ENCODE measurements at regions of chr9 and their contacts with region 1.

Region 1: GRCh38 chr9:131762356-131762932 is 22.6 kb upstream of the RAPGEF1 start:
- DNase-seq: peak; percentile 70 to 88
- H3K4me3 ChIP-seq: no peak overlapping the region
- H3K4me3 Mint-ChIP-seq: no peak overlapping the region
- H3K27ac Mint-ChIP-seq: no peak overlapping the region
- H3K4me1 ChIP-seq: peaks cover 4% of the 10 kb centered on the region
- H3K4me1 Mint-ChIP-seq: no peaks in the 10 kb centered on the region
- H3K27me3 ChIP-seq: no peaks in the 10 kb centered on the region
- H3K27me3 Mint-ChIP-seq: peaks cover 7% of the 10 kb centered on the region
- CTCF ChIP-seq: peak; percentile 85 to 92

Region 2: DNA sequence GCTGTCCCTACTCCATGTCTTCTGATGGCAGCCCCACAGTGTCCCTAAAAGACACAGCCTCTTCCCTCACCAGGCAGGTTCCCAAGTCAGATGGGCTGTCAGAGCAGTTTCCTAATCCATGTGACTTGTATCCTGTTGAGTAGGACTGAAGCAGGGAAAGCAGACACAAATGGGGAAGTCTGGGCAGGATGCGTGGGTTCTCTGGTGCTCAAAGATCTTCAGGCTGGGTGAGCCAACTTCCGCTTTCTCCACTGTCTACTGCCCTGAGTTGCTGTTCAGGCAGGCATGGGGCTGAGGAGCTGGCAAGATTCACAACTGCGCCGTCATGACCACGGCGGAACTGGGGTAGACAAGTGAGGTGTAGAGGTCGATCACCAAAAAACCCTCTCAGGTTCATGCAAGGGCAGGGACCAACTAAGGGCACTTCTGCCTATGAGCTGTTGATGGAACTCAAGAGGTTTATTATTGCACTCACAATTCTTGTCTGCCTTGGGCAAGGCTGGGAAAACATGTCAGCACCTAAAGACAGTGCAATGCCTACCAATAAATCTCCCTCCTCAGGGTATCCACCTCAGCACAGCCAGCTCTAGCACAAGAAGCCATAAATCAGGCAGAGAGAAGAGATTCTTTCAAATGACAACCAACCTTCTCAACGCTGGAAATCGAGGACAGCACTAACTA is 105.9 kb before region 1 on chr9:
- CTCF ChIA-PET with region 1: no interaction called
- POLR2A ChIA-PET with region 1: no interaction called
- intact Hi-C with region 1: no loop called
- DNase-seq: no peak
- H3K4me3 ChIP-seq: no peak overlapping the region
- H3K4me3 Mint-ChIP-seq: no peak overlapping the region
- H3K27ac Mint-ChIP-seq: no peak overlapping the region
- H3K4me1 ChIP-seq: peaks cover 29% of the 10 kb centered on the region
- H3K4me1 Mint-ChIP-seq: peaks cover 33% of the 10 kb centered on the region
- H3K27me3 ChIP-seq: no peaks in the 10 kb centered on the region
- H3K27me3 Mint-ChIP-seq: no peaks in the 10 kb centered on the region
- CTCF ChIP-seq: no peak

Region 3: GRCh38 chr9:131954299-131954698 is 191.9 kb after region 1 on chr9:
- CTCF ChIA-PET with region 1: no interaction called
- POLR2A ChIA-PET with region 1: no interaction called
- intact Hi-C with region 1: loop called (anchors 1 kb)
- DNase-seq: peak in 1 of 2 experiments; percentile 36
- H3K4me3 ChIP-seq: no peak overlapping the region
- H3K4me3 Mint-ChIP-seq: no peak overlapping the region
- H3K27ac Mint-ChIP-seq: no peak overlapping the region
- H3K4me1 ChIP-seq: no peaks in the 10 kb centered on the region
- H3K4me1 Mint-ChIP-seq: no peaks in the 10 kb centered on the region
- H3K27me3 ChIP-seq: no peaks in the 10 kb centered on the region
- H3K27me3 Mint-ChIP-seq: no peaks in the 10 kb centered on the region
- CTCF ChIP-seq: peak in 1 of 2 experiments; percentile 64

Region 4: DNA sequence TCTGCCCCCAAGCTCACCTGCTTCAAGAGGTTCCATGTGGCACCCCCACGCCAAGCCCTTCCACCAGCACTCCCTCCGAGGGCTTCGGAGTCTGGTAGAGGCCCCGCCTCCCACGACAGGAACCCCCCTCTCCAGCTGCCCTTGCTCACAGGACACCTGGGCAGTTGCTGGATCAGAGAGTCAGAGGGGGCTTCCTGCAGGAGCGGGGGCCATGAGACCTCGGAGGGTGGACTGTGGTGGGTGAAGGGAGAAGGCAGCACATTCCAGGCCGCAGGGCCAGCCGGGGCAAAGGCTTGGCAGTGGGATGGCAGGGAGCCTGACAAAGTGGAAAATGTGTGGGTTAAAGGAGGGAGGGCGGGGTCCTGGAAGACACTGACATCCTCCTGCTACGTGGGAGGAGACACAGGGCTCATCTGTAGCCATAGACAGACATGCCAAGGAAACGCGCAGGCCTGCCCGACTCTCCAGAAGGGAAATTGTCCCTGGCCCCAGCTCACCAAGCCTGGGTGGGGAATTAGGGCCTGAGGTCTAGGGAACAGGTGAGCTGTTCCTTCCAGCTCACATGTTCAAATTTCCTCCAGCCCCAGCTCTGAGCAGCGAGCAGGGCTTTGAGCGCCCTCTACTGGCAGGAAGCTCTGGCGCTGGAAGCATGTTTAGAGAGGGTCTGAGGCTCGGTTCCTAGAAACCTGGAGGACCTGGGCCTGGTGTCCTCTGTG is 473.7 kb after region 1 on chr9:
- CTCF ChIA-PET with region 1: interaction called, 8 read pairs
- POLR2A ChIA-PET with region 1: no interaction called
- intact Hi-C with region 1: loop called (anchors 1 kb)
- DNase-seq: peak; percentile 78 to 85
- H3K4me3 ChIP-seq: no peak overlapping the region
- H3K4me3 Mint-ChIP-seq: no peak overlapping the region
- H3K27ac Mint-ChIP-seq: no peak overlapping the region
- H3K4me1 ChIP-seq: peaks cover 5% of the 10 kb centered on the region; the same call in 1 of the 2 replicates
- H3K4me1 Mint-ChIP-seq: no peaks in the 10 kb centered on the region
- H3K27me3 ChIP-seq: no peaks in the 10 kb centered on the region; the same call in 1 of the 2 replicates
- H3K27me3 Mint-ChIP-seq: peaks cover 11% of the 10 kb centered on the region
- CTCF ChIP-seq: peak; percentile 81 to 95

Region 5: GRCh38 chr9:132250324-132251262 is 488.1 kb after region 1 on chr9:
- CTCF ChIA-PET with region 1: interaction called, 4 read pairs
- POLR2A ChIA-PET with region 1: no interaction called
- intact Hi-C with region 1: loop called (anchors 5 kb)
- DNase-seq: peak in 1 of 2 experiments; percentile 14
- H3K4me3 ChIP-seq: no peak overlapping the region
- H3K4me3 Mint-ChIP-seq: no peak overlapping the region
- H3K27ac Mint-ChIP-seq: no peak overlapping the region
- H3K4me1 ChIP-seq: no peaks in the 10 kb centered on the region
- H3K4me1 Mint-ChIP-seq: no peaks in the 10 kb centered on the region
- H3K27me3 ChIP-seq: no peaks in the 10 kb centered on the region
- H3K27me3 Mint-ChIP-seq: no peaks in the 10 kb centered on the region
- CTCF ChIP-seq: no peak

Region 6: GRCh38 chr9:132268725-132269352 is 506.4 kb after region 1 on chr9:
- CTCF ChIA-PET with region 1: interaction called, 3 read pairs
- POLR2A ChIA-PET with region 1: no interaction called
- intact Hi-C with region 1: loop called (anchors 2 kb)
- DNase-seq: peak; percentile 67 to 74
- H3K4me3 ChIP-seq: no peak overlapping the region
- H3K4me3 Mint-ChIP-seq: no peak overlapping the region
- H3K27ac Mint-ChIP-seq: peak overlapping the region; percentile 77
- H3K4me1 ChIP-seq: peaks cover 7% of the 10 kb centered on the region
- H3K4me1 Mint-ChIP-seq: no peaks in the 10 kb centered on the region
- H3K27me3 ChIP-seq: no peaks in the 10 kb centered on the region
- H3K27me3 Mint-ChIP-seq: no peaks in the 10 kb centered on the region
- CTCF ChIP-seq: peak; percentile 69 to 88

Measured in Caco-2 (cell line).